ENCODE measurements at regions of chr12 and their contacts with region 1.

Region 1: DNA sequence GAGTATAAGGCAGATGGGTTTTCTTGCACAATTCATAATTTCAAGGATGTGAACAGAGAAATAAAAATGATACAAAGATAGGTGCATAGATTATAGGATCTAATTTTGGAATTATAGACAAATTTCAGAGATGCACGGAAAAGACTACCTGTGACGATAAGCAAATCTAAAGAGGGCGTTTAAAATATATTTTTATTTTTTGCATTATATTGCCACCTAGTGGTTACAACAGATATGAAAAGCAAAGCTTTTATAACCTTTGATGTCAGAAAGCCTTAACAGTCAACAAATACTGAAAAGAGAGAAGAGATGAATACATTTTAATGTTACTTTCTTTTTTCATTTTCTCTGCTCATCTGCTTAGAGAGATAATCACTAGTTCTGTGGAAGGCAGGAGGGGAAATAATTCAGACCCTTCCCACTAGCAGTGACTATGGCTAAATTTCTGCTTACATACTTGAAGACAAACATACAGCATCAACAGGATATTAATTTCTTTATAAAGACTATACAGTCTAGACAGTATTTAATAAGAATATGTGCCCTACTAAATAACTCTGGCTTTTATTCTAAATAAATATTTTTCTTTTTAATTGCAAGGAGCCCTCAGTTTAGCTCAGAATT is 46.3 kb downstream of the NTS start:
- DNase-seq: peak; percentile 19
- ATAC-seq: no peak
- H3K4me3 ChIP-seq: no peak overlapping the region
- H3K4me3 Mint-ChIP-seq: no peak overlapping the region
- H3K27ac ChIP-seq: no peak overlapping the region
- H3K27ac Mint-ChIP-seq: no peak overlapping the region
- H3K4me1 ChIP-seq: no peaks in the 10 kb centered on the region
- H3K4me1 Mint-ChIP-seq: no peaks in the 10 kb centered on the region
- H3K27me3 ChIP-seq: no peaks in the 10 kb centered on the region
- H3K27me3 Mint-ChIP-seq: no peaks in the 10 kb centered on the region
- CTCF ChIP-seq: peak; percentile 85

Region 2: DNA sequence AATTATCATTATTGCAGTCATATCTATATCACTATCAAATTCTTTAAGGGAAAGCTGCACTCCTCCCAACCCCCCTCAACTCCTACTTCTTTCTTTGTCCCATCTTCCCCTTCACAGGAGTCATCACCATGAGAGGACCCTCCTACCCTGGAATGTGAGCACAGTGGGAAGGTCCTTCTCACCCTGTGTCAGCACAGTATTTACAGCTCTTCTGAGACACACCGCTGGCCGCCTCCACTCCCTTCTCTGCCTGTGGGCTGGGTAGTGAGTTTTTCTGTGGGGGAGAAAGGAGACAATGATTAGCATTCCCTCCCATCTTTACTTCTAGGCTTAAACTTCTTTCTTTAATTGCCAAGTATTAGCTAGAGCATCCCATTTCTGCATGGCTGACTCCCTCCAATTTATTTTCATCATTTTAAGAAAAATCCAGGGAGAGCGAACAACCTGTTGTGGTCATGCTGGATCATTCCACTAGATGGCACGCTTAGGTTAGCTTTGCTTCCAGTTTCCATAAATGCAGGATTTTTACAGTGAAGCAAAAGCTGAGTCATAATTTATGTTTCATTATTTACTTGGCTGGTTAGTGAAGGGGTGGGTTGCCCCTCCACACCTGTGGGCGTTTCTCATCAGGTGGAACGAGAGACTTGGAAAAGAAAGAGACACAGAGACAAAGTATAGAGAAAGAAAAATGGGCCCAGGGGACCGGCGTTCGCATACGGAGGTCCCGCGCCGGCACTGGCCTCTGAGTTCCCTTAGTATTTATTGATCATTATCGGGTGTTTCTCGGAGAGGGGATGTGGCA is 451.9 kb before region 1 on chr12:
- CTCF ChIA-PET with region 1: interaction called, 3 read pairs
- POLR2A ChIA-PET with region 1: no interaction called
- intact Hi-C with region 1: loop called (anchors 5 kb)
- DNase-seq: peak; percentile 29
- ATAC-seq: no peak
- H3K4me3 ChIP-seq: peak overlapping the region in 4 of 5 experiments; percentile 14 to 44 (median 30)
- H3K4me3 Mint-ChIP-seq: peak overlapping the region; percentile 90
- H3K27ac ChIP-seq: no peak overlapping the region
- H3K27ac Mint-ChIP-seq: no peak overlapping the region
- H3K4me1 ChIP-seq: peaks cover 3 to 6% of the 10 kb centered on the region in 2 donors
- H3K4me1 Mint-ChIP-seq: peaks cover 13% of the 10 kb centered on the region
- H3K27me3 ChIP-seq: no peaks in the 10 kb centered on the region
- H3K27me3 Mint-ChIP-seq: peaks cover 6% of the 10 kb centered on the region
- CTCF ChIP-seq: peak; percentile 62

Region 3: GRCh38 chr12:85866986-85867776 is 53.3 kb before region 1 on chr12:
- CTCF ChIA-PET with region 1: no interaction called
- POLR2A ChIA-PET with region 1: no interaction called
- intact Hi-C with region 1: no loop called
- DNase-seq: peak; percentile 19
- ATAC-seq: no peak
- H3K4me3 ChIP-seq: no peak overlapping the region
- H3K4me3 Mint-ChIP-seq: no peak overlapping the region
- H3K27ac ChIP-seq: no peak overlapping the region
- H3K27ac Mint-ChIP-seq: no peak overlapping the region
- H3K4me1 ChIP-seq: no peaks in the 10 kb centered on the region
- H3K4me1 Mint-ChIP-seq: no peaks in the 10 kb centered on the region
- H3K27me3 ChIP-seq: no peaks in the 10 kb centered on the region
- H3K27me3 Mint-ChIP-seq: no peaks in the 10 kb centered on the region
- CTCF ChIP-seq: peak; percentile 59

Region 4: DNA sequence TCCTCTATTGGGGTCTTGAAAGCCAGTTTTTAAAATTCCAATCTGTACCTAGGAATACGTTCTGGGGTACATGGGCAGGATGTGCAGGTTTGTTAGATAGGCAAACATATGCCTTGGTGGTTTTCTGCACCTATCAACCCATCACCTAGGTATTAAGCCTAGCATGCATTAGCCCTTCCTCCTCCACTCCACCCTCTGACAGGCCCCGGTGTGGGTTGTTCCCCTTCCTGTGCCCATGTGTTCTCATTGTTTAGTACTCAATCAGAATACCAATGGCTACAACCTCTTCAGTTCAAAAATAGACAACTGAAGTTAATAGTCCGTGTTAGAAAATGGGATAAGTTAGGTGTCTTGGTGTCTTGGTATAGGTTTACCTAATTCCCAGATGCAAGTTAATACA is 43.0 kb before region 1 on chr12:
- CTCF ChIA-PET with region 1: no interaction called
- POLR2A ChIA-PET with region 1: no interaction called
- intact Hi-C with region 1: no loop called
- DNase-seq: no peak
- ATAC-seq: no peak
- H3K4me3 ChIP-seq: no peak overlapping the region
- H3K4me3 Mint-ChIP-seq: no peak overlapping the region
- H3K27ac ChIP-seq: no peak overlapping the region
- H3K27ac Mint-ChIP-seq: no peak overlapping the region
- H3K4me1 ChIP-seq: no peaks in the 10 kb centered on the region
- H3K4me1 Mint-ChIP-seq: no peaks in the 10 kb centered on the region
- H3K27me3 ChIP-seq: no peaks in the 10 kb centered on the region
- H3K27me3 Mint-ChIP-seq: no peaks in the 10 kb centered on the region
- CTCF ChIP-seq: no peak

Region 5: DNA sequence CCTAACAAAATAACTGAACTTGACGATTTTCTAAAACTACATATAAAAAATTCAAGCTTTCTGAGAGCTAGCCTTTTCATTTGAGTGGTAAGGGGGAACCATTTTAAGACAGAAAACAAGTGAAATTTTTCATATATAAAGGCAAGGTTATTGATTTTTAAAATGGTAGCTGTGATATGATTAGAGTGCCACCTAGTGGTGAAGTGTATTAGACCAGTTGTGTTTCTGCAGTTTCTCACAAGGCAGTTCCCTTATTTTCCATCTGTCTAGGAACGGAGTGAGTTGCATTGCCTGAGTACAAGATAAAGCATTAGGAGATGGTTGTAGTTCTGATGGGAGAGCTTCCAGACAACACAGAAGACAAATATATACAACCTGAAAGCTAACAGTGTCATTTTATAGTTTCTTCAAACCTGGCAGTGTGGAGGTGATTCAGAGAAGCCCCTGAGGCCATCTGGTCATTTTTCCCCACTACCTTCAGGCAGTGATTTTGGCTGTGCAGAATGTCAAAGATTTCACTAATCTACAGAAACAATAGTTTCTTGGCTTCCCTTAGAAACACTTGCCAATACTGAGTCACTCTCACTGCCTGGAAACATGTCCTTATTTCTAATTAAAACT is 1927.9 kb after region 1 on chr12:
- CTCF ChIA-PET with region 1: no interaction called
- POLR2A ChIA-PET with region 1: no interaction called
- intact Hi-C with region 1: loop called (anchors 5 kb)
- DNase-seq: peak; percentile 64
- ATAC-seq: peak; percentile 41
- H3K4me3 ChIP-seq: no peak overlapping the region
- H3K4me3 Mint-ChIP-seq: no peak overlapping the region
- H3K27ac ChIP-seq: no peak overlapping the region
- H3K27ac Mint-ChIP-seq: no peak overlapping the region
- H3K4me1 ChIP-seq: no peaks in the 10 kb centered on the region
- H3K4me1 Mint-ChIP-seq: no peaks in the 10 kb centered on the region
- H3K27me3 ChIP-seq: no peaks in the 10 kb centered on the region
- H3K27me3 Mint-ChIP-seq: no peaks in the 10 kb centered on the region
- CTCF ChIP-seq: peak; percentile 91

Measured in B cell (primary cell).